PC-3 (cell line): ENCODE measurements at regions of chr11 and their contacts with region 1.

Region 1: DNA sequence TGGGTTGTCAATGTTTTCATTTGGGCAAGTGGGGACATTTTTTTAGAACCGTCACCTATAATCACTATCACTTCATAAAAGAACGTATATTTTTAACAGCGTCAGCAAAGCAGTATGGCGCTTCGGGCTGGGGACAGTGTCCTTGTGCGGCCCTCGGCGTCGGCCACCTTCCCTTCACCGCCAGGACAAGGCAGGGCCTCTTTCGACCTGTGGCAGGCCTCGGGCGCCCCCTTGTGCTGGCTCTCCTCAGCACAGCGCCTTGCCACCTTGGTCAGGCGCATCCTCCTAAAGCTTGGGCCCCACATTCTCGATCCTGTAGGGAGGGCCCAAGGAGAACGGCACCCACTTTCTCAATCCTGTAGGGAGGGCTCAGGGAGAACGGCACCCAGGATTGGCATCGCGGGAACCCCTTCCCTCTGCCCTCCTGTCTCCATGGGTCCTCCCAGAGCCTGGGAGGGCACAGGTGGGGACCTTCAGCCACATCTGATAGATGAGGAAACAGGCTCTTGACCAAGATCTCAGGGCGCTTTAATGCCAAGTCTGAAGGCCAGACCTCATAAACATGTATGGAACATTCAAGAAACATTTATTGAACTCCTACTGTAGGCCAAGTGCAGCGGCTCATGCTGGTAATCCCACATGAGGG is 11.5 kb upstream of the FADD start:
- DNase-seq: peak; percentile 84
- ATAC-seq: peak; percentile 80
- H3K4me3 ChIP-seq: no peak overlapping the region
- H3K27ac ChIP-seq: no peak overlapping the region
- H3K4me1 ChIP-seq: peaks cover 8% of the 10 kb centered on the region; the same call in 1 of the 2 replicates
- H3K27me3 ChIP-seq: no peaks in the 10 kb centered on the region
- CTCF ChIP-seq: peak; percentile 98

Region 2: GRCh38 chr11:69588270-69588669 is 603.3 kb before region 1 on chr11:
- CTCF ChIA-PET with region 1: no interaction called
- POLR2A ChIA-PET with region 1: no interaction called
- intact Hi-C with region 1: no loop called
- DNase-seq: peak; percentile 85
- ATAC-seq: peak; percentile 78
- H3K4me3 ChIP-seq: no peak overlapping the region
- H3K27ac ChIP-seq: peak overlapping the region; percentile 59
- H3K4me1 ChIP-seq: peaks cover 18% of the 10 kb centered on the region
- H3K27me3 ChIP-seq: no peaks in the 10 kb centered on the region
- CTCF ChIP-seq: peak; percentile 56

Region 3: GRCh38 chr11:69704508-69705253 is 486.9 kb before region 1 on chr11:
- CTCF ChIA-PET with region 1: no interaction called
- POLR2A ChIA-PET with region 1: no interaction called
- intact Hi-C with region 1: loop called (anchors 5 kb)
- DNase-seq: peak; percentile 49
- ATAC-seq: peak; percentile 68
- H3K4me3 ChIP-seq: peak overlapping the region; percentile 68
- H3K27ac ChIP-seq: no peak overlapping the region
- H3K4me1 ChIP-seq: peaks cover 13% of the 10 kb centered on the region
- H3K27me3 ChIP-seq: no peaks in the 10 kb centered on the region
- CTCF ChIP-seq: peak; percentile 80

Region 4: DNA sequence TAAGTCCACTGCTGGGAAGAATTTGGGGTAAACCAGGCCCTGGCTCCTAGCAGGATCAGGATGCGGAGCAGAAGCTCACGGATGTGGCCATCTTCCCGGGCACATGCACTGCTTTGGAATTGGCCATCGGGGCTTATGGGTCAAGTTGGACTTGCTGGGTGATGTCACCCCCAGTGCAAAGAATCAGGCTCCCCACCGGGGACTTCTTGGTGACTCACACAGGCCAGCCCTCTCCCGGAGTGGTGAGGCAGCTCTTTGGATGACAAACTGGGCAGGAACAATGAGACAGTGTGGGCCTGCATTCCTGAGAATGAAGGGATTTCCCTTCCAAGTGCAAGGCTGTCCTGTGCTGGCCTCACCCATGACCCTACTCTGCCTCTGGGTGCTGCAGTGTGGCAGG is 242.3 kb before region 1 on chr11:
- CTCF ChIA-PET with region 1: no interaction called
- POLR2A ChIA-PET with region 1: no interaction called
- intact Hi-C with region 1: loop called (anchors 10 kb)
- DNase-seq: peak; percentile 99
- ATAC-seq: peak; percentile 81
- H3K4me3 ChIP-seq: no peak overlapping the region
- H3K27ac ChIP-seq: peak overlapping the region; percentile 97
- H3K4me1 ChIP-seq: peaks cover 45% of the 10 kb centered on the region
- H3K27me3 ChIP-seq: no peaks in the 10 kb centered on the region
- CTCF ChIP-seq: no peak

Region 5: DNA sequence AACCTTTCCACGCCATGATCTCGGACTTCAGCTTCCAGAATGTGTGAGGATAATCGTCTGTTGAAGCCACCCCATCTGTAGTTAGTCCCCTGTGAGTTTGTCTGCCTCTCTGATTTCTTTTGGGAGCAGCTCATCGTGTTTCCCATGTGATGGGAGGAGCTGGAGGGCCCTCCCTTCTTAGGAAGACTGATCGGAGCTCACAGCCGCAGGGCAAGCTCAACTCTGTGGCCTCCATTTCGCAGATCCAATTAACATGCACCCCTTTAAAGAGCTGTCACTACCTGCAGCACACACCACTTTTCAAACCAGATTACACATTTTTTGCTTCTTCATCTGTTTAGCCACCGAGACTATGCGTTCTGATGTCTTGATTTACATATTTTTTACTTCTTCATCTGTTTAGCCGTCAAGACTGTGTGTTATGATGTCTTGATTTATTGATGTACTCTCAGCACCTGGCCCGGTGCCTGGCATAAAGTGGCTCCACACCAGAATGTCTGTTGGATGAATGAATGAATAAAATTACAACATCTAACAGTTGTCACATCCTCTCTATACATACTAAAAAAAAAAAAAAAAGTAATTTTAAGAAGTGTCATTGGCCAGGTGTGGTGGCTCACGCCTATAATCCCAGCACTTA is 64.0 kb after region 1 on chr11:
- CTCF ChIA-PET with region 1: no interaction called
- POLR2A ChIA-PET with region 1: no interaction called
- intact Hi-C with region 1: no loop called
- DNase-seq: no peak
- ATAC-seq: no peak
- H3K4me3 ChIP-seq: no peak overlapping the region
- H3K27ac ChIP-seq: no peak overlapping the region
- H3K4me1 ChIP-seq: no peaks in the 10 kb centered on the region
- H3K27me3 ChIP-seq: no peaks in the 10 kb centered on the region
- CTCF ChIP-seq: no peak